Mammary epithelial cell (primary cell): ENCODE measurements at regions of chr2 and their contacts with region 1.

Region 1: DNA sequence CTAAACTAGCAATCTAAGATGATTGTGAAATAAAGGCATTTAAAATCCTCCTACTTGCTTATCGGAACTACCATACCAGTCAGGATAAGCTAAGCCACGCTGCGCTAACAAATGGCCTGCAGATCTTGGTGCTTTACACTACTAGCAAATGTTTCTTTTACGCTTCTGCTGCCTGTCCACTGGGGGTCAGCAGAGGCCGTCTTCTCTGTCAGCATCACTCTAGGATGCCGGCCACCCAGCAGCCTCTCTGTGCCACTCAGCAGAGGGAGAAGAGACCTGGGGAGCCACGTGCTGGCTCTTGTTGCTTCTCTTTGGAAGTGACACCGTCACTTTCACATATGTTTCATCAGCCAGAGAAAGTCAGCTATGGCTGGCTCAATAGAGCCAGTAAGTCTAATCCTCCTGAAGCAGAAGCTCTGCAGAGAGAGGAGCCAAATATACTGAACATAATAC is 36.6 kb downstream of the COPS8 start:
- DNase-seq: peak; percentile 54
- H3K4me3 ChIP-seq: no peak overlapping the region
- H3K27ac ChIP-seq: no peak overlapping the region
- H3K4me1 ChIP-seq: peaks cover 21% of the 10 kb centered on the region
- H3K27me3 ChIP-seq: no peaks in the 10 kb centered on the region
- CTCF ChIP-seq: peak; percentile 67 to 79

Region 2: GRCh38 chr2:237154082-237154638 is 31.9 kb after region 1 on chr2:
- CTCF ChIA-PET with region 1: no interaction called
- dilution Hi-C with region 1: no loop called
- in situ Hi-C with region 1: no loop called
- intact Hi-C with region 1: loop called (anchors 1 kb)
- DNase-seq: peak; percentile 37
- H3K4me3 ChIP-seq: no peak overlapping the region
- H3K27ac ChIP-seq: no peak overlapping the region
- H3K4me1 ChIP-seq: peaks cover 9% of the 10 kb centered on the region
- H3K27me3 ChIP-seq: no peaks in the 10 kb centered on the region
- CTCF ChIP-seq: peak; percentile 64 to 67

Region 3: DNA sequence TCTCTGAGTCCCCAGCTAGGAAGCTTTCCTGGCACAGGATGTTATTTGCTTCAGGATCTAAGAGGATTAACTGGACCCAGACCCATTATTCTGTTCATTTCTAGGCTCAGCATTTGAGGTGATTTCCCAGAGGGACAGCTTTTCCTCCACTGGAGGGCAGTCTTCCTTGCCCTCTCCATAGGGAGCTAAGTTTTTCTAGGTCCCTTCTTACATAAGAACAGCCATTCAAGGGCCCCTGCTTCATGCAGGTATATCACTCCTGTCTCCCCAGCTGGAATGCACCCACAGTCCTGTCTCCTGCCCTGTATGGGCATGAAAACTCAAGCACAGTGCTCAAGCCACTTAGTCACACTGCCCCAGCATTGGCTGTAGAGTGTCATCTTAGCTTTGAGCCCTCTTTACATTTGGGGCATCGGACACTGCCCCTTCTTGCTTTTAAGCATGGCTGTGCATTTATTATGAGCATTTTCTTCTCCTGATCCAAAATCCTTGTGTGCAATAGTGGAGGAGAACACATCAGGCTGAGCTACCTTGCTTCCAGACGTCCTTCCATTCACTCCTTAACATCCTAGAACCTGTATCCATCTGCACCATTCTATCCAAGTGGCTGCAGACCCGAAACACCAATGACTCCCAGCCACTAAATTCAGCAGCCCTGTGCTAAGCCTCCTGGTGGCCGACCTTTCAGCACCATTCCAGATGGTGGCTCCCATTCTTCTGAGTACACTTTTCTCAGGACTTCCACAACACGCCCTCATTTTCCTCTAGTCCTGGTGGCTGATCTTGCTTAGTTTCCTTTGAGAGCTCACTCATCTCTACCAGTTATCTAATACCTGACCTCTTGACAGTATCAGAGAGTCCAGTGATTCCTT is 43.4 kb after region 1 on chr2:
- CTCF ChIA-PET with region 1: no interaction called
- dilution Hi-C with region 1: no loop called
- in situ Hi-C with region 1: no loop called
- intact Hi-C with region 1: loop called (anchors 1 kb)
- DNase-seq: no peak
- H3K4me3 ChIP-seq: no peak overlapping the region
- H3K27ac ChIP-seq: no peak overlapping the region
- H3K4me1 ChIP-seq: no peaks in the 10 kb centered on the region
- H3K27me3 ChIP-seq: no peaks in the 10 kb centered on the region
- CTCF ChIP-seq: peak; percentile 68 to 77